ENCODE measurements at regions of chr6 and their contacts with region 1.

Region 1: GRCh38 chr6:26156076-26156849 is 69.0 kb downstream of the HFE start:
- DNase-seq: peak; percentile 91
- H3K4me3 Mint-ChIP-seq: peak overlapping the region; percentile 95
- H3K27ac Mint-ChIP-seq: peak overlapping the region; percentile 98
- H3K4me1 Mint-ChIP-seq: peaks cover 45% of the 10 kb centered on the region
- H3K27me3 Mint-ChIP-seq: no peaks in the 10 kb centered on the region

Region 2: DNA sequence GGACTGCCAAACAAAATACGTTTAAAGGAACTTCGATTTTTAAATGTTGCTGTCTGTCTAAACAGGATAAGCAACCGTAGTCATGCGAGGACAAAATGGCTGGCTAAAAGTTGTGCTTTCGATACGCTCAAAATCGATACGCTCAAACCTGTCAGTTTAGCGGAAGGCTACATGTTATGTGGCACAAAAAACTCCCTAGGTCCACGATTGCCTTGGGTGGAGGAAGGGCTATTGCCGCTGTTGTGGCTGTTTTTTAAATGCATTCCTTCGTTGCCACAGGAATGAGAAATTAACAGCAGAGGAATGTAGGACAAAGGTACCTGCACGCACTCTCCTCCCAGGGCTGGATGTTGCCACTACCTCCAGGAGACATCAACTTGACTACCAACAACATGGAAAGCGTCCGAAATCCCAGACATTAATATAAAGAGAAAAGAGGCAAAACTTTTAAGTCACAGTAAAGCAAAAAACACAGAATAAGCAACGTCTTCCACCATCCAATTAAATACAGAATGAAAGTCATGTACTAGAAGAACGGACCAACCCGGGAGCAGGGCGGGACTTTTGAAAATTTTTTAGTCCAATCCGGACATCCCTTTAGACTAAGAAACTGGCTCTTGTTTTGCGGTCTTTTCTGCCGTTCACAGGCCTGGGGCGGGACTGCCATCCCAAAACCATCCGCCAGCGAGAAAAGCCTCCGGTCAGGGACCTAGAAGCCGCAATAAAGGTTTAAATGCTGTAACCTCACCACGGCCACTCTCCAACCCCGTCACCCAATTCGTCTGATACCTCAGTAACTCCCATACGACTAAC is 101.2 kb before region 1 on chr6:
- CTCF ChIA-PET with region 1: no interaction called
- POLR2A ChIA-PET with region 1: interaction called, 180 read pairs
- DNase-seq: peak; percentile 92
- H3K4me3 Mint-ChIP-seq: peak overlapping the region; percentile 83
- H3K27ac Mint-ChIP-seq: peak overlapping the region; percentile 99
- H3K4me1 Mint-ChIP-seq: peaks cover 37% of the 10 kb centered on the region
- H3K27me3 Mint-ChIP-seq: no peaks in the 10 kb centered on the region

Region 3: GRCh38 chr6:26136321-26136720 is 19.9 kb before region 1 on chr6:
- CTCF ChIA-PET with region 1: no interaction called
- POLR2A ChIA-PET with region 1: interaction called, 2,087 read pairs
- DNase-seq: no peak
- H3K4me3 Mint-ChIP-seq: no peak overlapping the region
- H3K27ac Mint-ChIP-seq: no peak overlapping the region
- H3K4me1 Mint-ChIP-seq: peaks cover 21% of the 10 kb centered on the region
- H3K27me3 Mint-ChIP-seq: no peaks in the 10 kb centered on the region

Region 4: DNA sequence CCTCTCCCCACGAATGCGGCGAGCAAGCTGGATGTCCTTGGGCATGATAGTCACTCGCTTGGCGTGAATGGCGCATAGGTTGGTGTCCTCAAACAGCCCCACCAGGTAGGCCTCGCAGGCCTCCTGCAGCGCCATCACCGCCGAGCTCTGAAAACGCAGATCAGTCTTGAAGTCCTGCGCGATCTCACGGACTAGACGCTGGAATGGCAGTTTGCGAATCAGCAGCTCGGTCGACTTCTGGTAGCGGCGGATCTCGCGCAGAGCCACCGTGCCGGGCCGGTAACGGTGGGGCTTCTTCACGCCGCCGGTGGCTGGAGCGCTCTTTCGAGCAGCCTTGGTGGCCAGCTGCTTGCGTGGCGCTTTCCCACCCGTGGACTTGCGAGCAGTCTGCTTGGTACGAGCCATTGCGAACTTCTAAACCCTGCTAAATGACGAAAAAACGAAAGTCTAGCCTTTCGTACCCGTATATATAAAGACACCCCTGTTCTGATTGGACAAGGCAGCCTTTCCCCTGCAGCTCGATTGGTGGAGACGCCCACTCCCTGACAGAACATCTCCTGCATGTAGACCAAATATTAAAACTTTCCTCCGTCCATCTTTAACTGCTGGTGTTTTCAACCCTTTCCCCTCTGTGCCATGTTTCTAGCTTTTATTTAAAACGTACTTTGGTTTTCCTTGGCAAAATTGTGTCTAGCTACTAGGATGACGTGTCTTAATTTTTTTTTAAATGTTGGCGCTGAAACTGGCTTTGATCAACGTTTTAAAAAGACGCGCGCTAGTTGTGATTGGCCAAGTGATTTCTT is 40.8 kb after region 1 on chr6:
- CTCF ChIA-PET with region 1: interaction called, 8 read pairs
- POLR2A ChIA-PET with region 1: interaction called, 1,293 read pairs
- DNase-seq: peak; percentile 85
- H3K4me3 Mint-ChIP-seq: peak overlapping the region; percentile 93
- H3K27ac Mint-ChIP-seq: peak overlapping the region; percentile 96
- H3K4me1 Mint-ChIP-seq: peaks cover 49% of the 10 kb centered on the region
- H3K27me3 Mint-ChIP-seq: no peaks in the 10 kb centered on the region

Region 5: GRCh38 chr6:26234421-26235296 is 78.4 kb after region 1 on chr6:
- CTCF ChIA-PET with region 1: no interaction called
- POLR2A ChIA-PET with region 1: interaction called, 260 read pairs
- DNase-seq: peak; percentile 85
- H3K4me3 Mint-ChIP-seq: peak overlapping the region; percentile 76
- H3K27ac Mint-ChIP-seq: peak overlapping the region; percentile 95
- H3K4me1 Mint-ChIP-seq: peaks cover 41% of the 10 kb centered on the region
- H3K27me3 Mint-ChIP-seq: no peaks in the 10 kb centered on the region

Region 6: DNA sequence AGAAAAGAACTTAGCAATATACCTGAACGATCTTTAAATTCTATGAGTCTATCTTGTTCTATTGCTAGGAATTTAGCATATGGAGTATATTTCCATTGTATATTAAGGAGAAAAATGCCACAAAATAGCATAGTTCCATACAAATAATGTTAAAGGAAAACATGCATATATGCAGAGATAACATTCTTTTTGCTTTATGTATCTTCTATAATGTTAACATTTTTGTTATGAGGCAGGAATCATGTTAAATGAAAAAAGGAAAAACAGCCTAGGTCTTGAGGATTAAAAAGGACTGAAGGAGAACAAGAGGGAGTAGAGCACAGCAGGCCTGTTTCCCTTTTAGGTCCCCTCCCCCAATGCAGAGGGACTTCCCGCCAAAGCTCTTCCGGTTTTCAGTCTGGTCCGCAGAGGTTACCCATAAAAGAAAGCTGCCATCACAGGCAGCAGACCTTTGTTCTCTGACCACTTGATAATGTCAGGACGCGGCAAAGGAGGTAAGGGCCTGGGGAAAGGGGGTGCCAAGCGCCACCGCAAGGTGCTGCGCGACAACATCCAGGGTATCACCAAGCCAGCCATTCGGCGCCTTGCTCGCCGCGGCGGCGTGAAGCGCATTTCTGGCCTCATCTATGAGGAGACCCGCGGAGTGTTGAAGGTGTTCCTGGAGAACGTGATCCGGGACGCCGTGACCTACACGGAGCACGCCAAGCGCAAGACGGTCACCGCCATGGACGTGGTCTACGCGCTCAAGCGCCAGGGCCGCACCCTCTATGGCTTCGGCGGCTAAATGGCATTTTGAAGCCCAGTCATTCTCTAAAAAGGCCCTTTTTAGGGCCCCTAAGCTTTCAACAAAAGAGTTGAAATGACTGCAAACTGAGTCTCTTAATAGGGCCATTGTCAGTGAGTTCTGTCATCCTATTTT is 982.8 kb after region 1 on chr6:
- CTCF ChIA-PET with region 1: no interaction called
- POLR2A ChIA-PET with region 1: interaction called, 68 read pairs
- DNase-seq: peak; percentile 80
- H3K4me3 Mint-ChIP-seq: peak overlapping the region; percentile 91
- H3K27ac Mint-ChIP-seq: peak overlapping the region; percentile 98
- H3K4me1 Mint-ChIP-seq: peaks cover 67% of the 10 kb centered on the region
- H3K27me3 Mint-ChIP-seq: no peaks in the 10 kb centered on the region

Measured in activated CD4-positive, alpha-beta memory T cell treated with anti-CD3 and anti-CD28 coated beads, Interleukin-2, amount 10 ng/mL, durations not matched to agents 7 days and 5 days (primary cell).